ENCODE measurements at regions of chr19 and their contacts with region 1.

Region 1: GRCh38 chr19:7868676-7869452 is 5.3 kb downstream of the PRR36 start:
- DNase-seq: peak; percentile 77 to 94 (median 87)
- H3K4me3 ChIP-seq: peak overlapping the region; percentile 81
- H3K4me3 Mint-ChIP-seq: peak overlapping the region; percentile 79 to 90 (median 82)
- H3K27ac ChIP-seq: peak overlapping the region; percentile 59
- H3K27ac Mint-ChIP-seq: peak overlapping the region; percentile 72 to 92 (median 81)
- H3K4me1 ChIP-seq: peaks cover 33% of the 10 kb centered on the region
- H3K4me1 Mint-ChIP-seq: peaks cover 33 to 52% (median 34%) of the 10 kb centered on the region in 3 donors
- H3K27me3 ChIP-seq: peaks cover 19% of the 10 kb centered on the region
- H3K27me3 Mint-ChIP-seq: peaks cover 15 to 41% of the 10 kb centered on the region in 2 donors

Region 2: DNA sequence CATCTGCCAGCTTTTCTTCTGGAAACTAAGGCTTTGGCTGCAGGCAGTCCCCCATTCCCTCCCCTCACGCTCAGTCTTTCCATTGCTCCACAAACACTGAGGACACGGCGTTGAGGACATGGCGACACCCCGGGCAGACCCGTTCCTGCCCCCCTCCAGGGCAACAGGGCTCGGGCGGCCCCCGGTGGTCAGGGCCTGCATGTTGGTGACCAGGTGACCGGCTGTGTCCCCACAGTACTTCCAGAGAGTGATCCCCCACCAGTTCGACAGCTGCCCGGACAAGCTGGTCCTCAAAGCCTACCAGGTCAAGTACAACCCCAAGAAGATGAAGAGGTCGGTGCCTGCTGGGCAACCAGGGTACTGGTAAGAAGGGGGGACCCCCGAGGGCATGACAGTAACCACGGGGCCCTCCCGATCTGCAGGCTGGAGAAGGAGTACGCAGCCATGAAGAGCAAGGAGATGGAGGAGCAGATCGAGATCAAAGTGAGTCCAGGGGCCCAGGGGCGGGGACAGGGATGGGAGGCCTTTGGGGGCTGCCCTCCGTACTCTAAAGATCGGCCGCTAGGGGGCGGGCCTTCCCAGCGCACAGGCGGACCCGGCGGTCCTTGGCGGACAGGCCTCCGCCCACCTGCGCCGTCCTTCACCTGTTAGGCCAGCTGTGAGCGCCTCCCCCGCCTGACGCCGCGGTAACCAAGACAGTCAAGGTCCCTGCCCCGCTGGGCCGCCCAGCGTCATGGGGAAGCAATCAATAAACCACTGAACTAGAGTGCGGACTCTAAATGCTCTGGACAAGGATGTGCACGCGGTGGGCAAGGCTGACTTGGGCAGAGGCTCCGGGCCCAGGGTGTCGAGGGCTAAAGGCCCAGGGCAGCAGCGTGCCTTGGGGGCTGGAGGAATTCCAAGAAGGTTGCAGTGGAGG is 15.8 kb before region 1 on chr19:
- CTCF ChIA-PET with region 1: interaction called, 19 read pairs
- POLR2A ChIA-PET with region 1: no interaction called
- DNase-seq: peak; percentile 49 to 72 (median 63)
- H3K4me3 ChIP-seq: no peak overlapping the region
- H3K4me3 Mint-ChIP-seq: no peak overlapping the region
- H3K27ac ChIP-seq: no peak overlapping the region
- H3K27ac Mint-ChIP-seq: no peak overlapping the region
- H3K4me1 ChIP-seq: peaks cover 9% of the 10 kb centered on the region
- H3K4me1 Mint-ChIP-seq: peaks cover 0 to 7% (median 0%) of the 10 kb centered on the region in 3 donors
- H3K27me3 ChIP-seq: no peaks in the 10 kb centered on the region
- H3K27me3 Mint-ChIP-seq: peaks cover 3 to 16% of the 10 kb centered on the region in 2 donors

Region 3: DNA sequence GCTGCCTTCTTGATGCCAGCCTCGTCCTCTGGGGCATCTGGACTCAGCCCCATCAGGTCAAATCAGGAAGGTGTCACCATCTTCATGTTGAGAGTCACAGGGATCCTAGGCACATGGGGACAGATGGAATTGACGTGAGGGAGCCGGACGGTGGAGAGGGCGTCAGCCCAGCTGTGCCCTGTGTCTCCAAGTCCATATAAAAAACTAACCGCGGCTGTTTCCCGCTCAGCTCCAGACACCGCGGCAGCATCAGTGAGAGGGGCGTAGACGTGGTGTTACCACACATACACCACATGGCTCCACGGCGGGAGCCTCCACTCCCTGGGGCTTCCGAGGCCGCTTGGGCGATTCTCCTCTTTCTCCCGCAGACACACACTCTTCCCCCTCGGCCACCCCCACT is 11.0 kb after region 1 on chr19:
- CTCF ChIA-PET with region 1: interaction called, 13 read pairs
- POLR2A ChIA-PET with region 1: no interaction called
- DNase-seq: no peak
- H3K4me3 ChIP-seq: no peak overlapping the region
- H3K4me3 Mint-ChIP-seq: no peak overlapping the region
- H3K27ac ChIP-seq: no peak overlapping the region
- H3K27ac Mint-ChIP-seq: no peak overlapping the region
- H3K4me1 ChIP-seq: peaks cover 2% of the 10 kb centered on the region
- H3K4me1 Mint-ChIP-seq: peaks cover 0 to 3% (median 3%) of the 10 kb centered on the region in 3 donors
- H3K27me3 ChIP-seq: peaks cover under 1% of the 10 kb centered on the region
- H3K27me3 Mint-ChIP-seq: peaks cover 4 to 6% of the 10 kb centered on the region in 2 donors

Region 4: DNA sequence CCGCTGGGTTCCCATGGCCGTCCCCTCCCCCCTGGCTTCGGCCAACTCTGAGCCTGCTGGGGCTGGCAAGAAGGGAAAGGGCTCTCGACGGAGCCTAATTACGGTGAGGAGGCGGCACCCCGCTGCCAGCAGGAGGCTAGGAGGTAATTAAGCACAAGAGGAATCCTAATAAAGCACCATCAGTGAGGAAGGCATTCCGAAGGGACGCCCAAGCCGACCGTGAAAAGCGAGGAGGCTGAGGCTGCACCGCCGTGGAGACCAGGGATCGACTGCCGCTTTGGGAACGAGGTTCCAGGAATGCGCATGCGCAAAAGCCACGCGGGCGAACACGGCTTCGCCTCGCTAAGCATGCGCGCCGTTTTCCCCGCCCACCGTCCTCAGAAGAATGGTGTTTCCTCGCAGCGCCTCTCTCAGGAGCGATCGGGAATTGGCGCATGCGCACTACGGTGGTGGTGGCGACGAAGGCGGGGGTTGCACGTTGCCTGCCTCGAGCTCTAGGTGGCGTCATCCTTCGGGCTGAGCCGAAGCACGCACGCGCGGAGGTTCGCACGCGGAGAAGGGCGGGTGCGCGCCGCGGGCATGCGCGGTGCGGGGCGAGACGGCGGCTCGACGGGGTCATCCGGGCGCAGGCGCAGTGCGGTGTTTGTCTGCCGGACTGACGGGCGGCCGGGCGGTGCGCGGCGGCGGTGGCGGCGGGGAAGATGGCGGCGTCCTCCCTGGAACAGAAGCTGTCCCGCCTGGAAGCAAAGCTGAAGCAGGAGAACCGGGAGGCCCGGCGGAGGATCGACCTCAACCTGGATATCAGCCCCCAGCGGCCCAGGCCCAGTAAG is 34.6 kb after region 1 on chr19 and contains the start of gene MAP2K7:
- CTCF ChIA-PET with region 1: interaction called, 17 read pairs
- POLR2A ChIA-PET with region 1: interaction called, 11 read pairs
- DNase-seq: peak; percentile 100
- H3K4me3 ChIP-seq: peak within 1 kb of the TSS; percentile 86
- H3K4me3 Mint-ChIP-seq: peak within 1 kb of the TSS; percentile 85 to 98 (median 89)
- H3K27ac ChIP-seq: peak within 1 kb of the TSS; percentile 89
- H3K27ac Mint-ChIP-seq: peak within 1 kb of the TSS; percentile 94 to 100 (median 98)
- H3K4me1 ChIP-seq: peaks cover 35% of the 10 kb centered on the region
- H3K4me1 Mint-ChIP-seq: peaks cover 22 to 42% (median 28%) of the 10 kb centered on the region in 3 donors
- H3K27me3 ChIP-seq: no peaks in the 10 kb centered on the region
- H3K27me3 Mint-ChIP-seq: peaks cover 0 to 18% of the 10 kb centered on the region in 2 donors
- total RNA-seq, gene MAP2K7: 35.9 to 38.3 TPM

Region 5: DNA sequence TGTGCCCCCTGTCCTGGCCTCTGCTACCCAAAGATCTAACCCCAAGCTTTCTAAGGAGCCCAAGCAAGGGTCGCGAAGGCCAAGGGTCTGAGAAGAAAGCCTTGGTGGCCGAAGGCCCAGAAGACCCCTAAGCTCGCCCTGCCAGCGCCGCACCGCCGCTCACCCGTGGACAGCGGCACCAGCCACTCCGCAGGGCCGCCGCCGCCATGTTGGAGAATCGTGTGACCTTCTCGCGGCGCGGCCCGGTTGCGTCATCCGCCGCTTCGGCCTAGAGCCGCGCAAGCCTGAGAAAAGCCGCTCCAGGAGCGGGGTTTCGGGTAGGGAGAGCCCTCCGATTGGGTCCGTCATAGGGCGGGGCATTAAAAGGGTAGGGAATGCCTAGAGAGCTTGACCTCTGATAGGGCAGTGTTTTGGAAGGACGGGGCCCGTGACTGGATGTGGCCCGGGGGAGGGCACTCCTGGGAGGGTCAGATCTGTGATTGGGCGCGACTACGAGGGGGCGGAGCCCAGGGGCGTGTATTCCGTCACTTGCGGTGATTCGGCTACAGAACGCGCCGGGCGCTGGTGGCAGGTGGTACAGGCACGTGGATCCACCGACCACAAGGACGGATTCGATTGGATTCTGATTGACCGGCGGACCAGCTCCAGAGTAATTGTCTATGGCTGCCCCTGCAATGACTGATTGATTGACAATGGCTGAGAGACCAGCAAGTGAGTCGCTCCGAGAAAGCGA is 74.7 kb after region 1 on chr19 and contains the start of gene TIMM44:
- CTCF ChIA-PET with region 1: interaction called, 11 read pairs
- POLR2A ChIA-PET with region 1: interaction called, 6 read pairs
- DNase-seq: peak; percentile 98 to 99 (median 99)
- H3K4me3 ChIP-seq: peak within 1 kb of the TSS; percentile 100
- H3K4me3 Mint-ChIP-seq: peak within 1 kb of the TSS; percentile 87 to 96 (median 91)
- H3K27ac ChIP-seq: peak within 1 kb of the TSS; percentile 98
- H3K27ac Mint-ChIP-seq: peak within 1 kb of the TSS; percentile 88 to 99 (median 96)
- H3K4me1 ChIP-seq: peaks cover 13% of the 10 kb centered on the region
- H3K4me1 Mint-ChIP-seq: peaks cover 23 to 45% (median 29%) of the 10 kb centered on the region in 3 donors
- H3K27me3 ChIP-seq: no peaks in the 10 kb centered on the region
- H3K27me3 Mint-ChIP-seq: peaks cover 0 to 2% of the 10 kb centered on the region in 2 donors
- total RNA-seq, gene TIMM44: 105 to 107 TPM

Measured in CD8-positive, alpha-beta memory T cell (primary cell).